Activated CD8-positive, alpha-beta T cell treated with anti-CD3 and anti-CD28 coated beads for 36 hours (primary cell): ENCODE measurements at regions of chr2 and their contacts with region 1.

Region 1: DNA sequence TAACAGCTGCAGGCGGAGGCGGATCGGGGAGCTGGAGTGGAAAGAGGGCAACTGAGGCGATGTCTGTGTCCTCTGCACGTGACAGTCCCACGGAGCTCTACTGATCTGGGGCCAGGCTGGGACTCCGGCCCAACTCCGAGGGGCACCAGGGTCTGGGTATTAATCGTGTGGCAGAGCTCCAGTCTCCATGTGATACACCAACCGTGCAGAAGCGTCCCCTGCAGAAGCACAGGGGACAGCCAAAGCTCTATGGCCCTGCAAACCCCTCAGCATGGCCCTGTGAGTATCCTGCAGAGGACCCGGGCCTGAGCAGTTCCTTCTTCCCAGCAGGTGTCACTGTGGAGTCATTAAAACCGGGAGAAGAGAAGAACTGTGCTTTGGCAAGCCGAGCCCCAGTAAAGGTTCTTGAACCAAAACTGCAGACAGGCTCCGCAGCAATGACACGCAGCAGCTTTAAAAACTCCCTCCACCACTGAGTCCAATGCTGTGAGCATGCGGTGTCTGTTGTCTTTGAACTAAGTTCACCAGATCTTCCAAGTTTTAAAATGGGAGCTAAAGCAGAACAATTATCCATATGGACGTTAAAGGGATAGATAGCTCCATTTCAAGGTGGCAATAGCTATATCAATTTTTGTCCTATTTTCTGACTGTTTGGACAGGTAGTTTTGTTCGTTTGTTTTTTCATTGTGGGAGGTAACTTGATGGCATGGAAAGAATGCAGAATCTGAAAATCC is 79.4 kb downstream of the TMEM182 start:
- DNase-seq: peak; percentile 42
- ATAC-seq: peak; percentile 53
- H3K4me3 Mint-ChIP-seq: no peak overlapping the region
- H3K27ac Mint-ChIP-seq: no peak overlapping the region
- H3K4me1 Mint-ChIP-seq: no peaks in the 10 kb centered on the region
- H3K27me3 Mint-ChIP-seq: no peaks in the 10 kb centered on the region
- CTCF ChIP-seq: no peak

Region 2: DNA sequence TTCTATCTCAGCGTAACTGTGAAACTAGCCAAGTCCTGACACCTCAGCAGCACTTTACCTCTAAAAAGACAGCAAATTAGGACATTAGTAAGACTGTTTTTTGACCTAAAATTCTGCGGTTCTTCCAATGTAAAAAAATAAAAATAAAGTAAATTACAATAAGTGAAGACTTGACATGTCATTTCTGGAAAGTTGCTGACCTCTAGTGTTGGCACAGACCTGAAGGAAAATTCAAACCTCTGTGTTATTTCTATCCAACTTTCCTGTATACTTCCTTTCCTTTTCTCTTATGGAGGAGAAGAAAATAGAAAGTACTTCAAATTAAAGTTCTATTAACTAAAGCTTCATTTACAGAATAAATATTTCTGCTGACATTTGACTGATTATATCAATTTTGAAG is 31.1 kb after region 1 on chr2:
- CTCF ChIA-PET with region 1: interaction called, 18 read pairs
- POLR2A ChIA-PET with region 1: no interaction called
- intact Hi-C with region 1: no loop called
- DNase-seq: no peak
- ATAC-seq: no peak
- H3K4me3 Mint-ChIP-seq: no peak overlapping the region
- H3K27ac Mint-ChIP-seq: no peak overlapping the region
- H3K4me1 Mint-ChIP-seq: no peaks in the 10 kb centered on the region
- H3K27me3 Mint-ChIP-seq: no peaks in the 10 kb centered on the region
- CTCF ChIP-seq: no peak

Region 3: DNA sequence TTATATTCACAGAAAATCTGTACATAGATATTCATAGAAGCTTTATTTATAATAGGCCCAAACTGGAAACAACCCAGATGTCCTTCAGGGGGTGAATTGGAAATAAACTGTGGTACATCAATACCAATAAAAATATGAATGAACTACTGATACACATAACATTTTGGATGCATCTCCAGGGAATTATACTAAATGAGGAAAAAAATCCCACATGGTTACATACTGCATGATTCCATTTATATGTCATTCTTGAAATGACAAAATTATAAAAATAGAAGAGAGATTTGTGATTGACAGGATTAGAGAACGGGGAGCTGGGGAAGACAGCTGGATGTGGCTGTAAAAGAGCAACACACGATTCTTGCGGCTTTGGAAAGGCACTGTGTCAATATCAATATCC is 355.5 kb after region 1 on chr2:
- CTCF ChIA-PET with region 1: no interaction called
- POLR2A ChIA-PET with region 1: no interaction called
- intact Hi-C with region 1: no loop called
- DNase-seq: no peak
- ATAC-seq: no peak
- H3K4me3 Mint-ChIP-seq: no peak overlapping the region
- H3K27ac Mint-ChIP-seq: no peak overlapping the region
- H3K4me1 Mint-ChIP-seq: no peaks in the 10 kb centered on the region
- H3K27me3 Mint-ChIP-seq: no peaks in the 10 kb centered on the region
- CTCF ChIP-seq: no peak